A673 (cell line): ENCODE measurements at regions of chr1 and their contacts with region 1.

Region 1: DNA sequence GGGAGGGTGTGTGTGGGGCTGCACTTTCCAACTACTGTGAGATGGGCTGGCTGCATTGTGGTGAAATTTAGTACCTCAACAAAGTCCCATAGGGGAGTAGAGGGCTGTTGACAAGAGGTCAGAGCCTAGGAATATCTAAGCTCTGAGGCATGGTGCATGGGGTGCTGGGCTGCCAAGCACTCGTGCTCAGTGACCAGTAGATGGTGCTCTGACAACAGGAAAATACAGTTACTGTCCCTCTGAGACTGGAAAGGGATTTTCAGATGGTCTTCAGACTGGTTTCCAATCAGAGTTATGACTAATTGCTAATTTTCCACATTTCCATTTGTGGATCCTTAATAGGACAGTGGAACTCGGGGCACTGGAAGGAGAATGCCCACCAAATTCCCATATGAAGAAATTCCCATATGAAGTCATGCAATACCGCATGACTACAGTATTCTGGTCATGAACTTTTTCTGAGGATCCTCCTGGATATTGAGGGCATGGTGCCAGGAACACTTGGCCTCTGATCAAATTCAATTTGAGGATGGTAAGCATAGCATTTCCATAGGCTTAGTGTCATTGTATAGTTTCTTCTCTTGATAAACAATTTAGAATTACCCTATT is 4.1 kb upstream of the CACNA1E start:
- DNase-seq: peak; percentile 67
- H3K4me3 ChIP-seq: no peak overlapping the region
- H3K27ac ChIP-seq: no peak overlapping the region
- H3K4me1 ChIP-seq: no peaks in the 10 kb centered on the region
- H3K27me3 ChIP-seq: peaks cover 90% of the 10 kb centered on the region
- CTCF ChIP-seq: peak; percentile 79

Region 2: GRCh38 chr1:181676269-181676668 is 197.0 kb after region 1 on chr1:
- CTCF ChIA-PET with region 1: no interaction called
- POLR2A ChIA-PET with region 1: no interaction called
- intact Hi-C with region 1: loop called (anchors 2 kb)
- DNase-seq: peak; percentile 41
- H3K4me3 ChIP-seq: no peak overlapping the region
- H3K27ac ChIP-seq: no peak overlapping the region
- H3K4me1 ChIP-seq: no peaks in the 10 kb centered on the region
- H3K27me3 ChIP-seq: peaks cover 58% of the 10 kb centered on the region
- CTCF ChIP-seq: peak; percentile 53

Region 3: DNA sequence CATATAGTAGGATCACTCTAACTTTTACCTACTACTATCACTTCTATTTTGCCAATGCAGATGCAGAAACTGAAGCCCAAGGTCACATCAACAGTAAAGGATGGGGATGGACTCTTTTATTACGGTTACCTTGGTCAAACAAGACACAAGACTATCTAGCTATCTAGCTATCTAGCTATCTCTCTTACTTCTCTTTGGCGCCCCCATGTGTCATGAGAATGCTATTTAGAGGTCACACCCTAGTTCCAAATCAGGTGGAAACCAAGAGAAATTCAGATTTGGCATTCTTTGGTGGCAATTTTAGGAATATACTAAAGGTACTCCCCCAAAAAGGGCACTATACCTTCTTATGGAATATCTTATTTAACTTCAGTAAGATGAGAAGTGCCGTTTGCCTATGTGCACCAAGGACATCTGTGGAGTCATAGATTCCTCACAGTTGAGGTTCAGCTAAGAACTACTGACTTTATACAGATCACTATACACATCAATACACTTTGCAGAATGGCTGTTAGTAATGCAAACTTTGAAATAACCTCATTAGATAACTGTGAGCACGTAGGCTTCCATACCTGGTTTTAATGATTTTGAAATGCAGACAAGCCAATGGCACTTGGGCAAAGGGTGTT is 575.6 kb after region 1 on chr1:
- CTCF ChIA-PET with region 1: interaction called, 6 read pairs
- POLR2A ChIA-PET with region 1: no interaction called
- intact Hi-C with region 1: loop called (anchors 2 kb)
- DNase-seq: peak; percentile 64
- H3K4me3 ChIP-seq: no peak overlapping the region
- H3K27ac ChIP-seq: no peak overlapping the region
- H3K4me1 ChIP-seq: no peaks in the 10 kb centered on the region
- H3K27me3 ChIP-seq: peaks cover 46% of the 10 kb centered on the region
- CTCF ChIP-seq: peak; percentile 76